Lower leg skin (tissue), 4 donors: ENCODE measurements at regions of chr16 and their contacts with region 1.

Region 1: GRCh38 chr16:88785106-88785924 is at the start of gene PIEZO1:
- DNase-seq: peak in 1 of 2 donors; percentile 93
- H3K4me3 ChIP-seq: peak within 1 kb of the TSS; percentile 69
- CTCF ChIP-seq: peak in 1 of 3 donors; percentile 66
- POLR2A ChIP-seq: no peak
- total RNA-seq, gene PIEZO1: 196 to 281 (median 206) TPM

Region 2: DNA sequence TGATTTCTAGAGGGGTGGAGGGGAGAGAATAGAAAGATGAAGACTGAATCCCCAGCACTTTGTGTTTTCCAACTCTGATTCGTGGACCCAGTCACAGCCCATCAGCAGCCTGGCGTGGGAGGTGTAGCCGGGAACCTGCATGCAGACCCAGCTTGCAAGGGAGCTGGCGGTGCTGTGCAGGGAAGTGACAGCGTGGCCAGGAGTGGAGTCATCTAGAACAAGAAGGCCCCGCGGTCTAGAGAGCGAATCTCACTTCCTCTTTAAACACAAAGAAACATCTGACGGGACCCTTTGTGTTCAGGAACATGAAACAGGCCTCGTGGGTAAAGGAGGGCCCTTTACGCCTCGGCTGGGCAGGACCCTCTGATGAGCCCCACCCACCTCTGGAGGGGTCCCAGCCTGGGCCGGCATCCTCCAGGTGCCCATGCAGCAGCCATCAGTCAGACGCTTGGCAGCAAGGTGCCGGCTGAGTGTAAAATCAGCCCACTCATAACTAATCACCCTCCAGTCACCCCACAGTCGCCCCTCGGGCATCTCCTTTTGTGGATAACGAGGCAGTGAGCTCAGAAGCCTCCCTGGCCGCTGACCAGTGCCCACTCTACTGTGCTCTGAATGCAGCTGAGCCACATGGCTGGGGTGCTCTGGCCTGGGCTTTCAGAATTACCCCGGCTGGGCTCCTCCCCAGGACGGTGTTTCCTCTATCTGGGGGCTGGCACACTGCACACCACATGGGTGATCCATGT is 103.4 kb before region 1 on chr16:
- intact Hi-C with region 1: no loop called
- DNase-seq: peak; percentile 57 to 90
- H3K4me3 ChIP-seq: no peak overlapping the region
- CTCF ChIP-seq: no peak
- POLR2A ChIP-seq: no peak

Region 3: GRCh38 chr16:88737298-88738150 is 47.8 kb before region 1 on chr16:
- intact Hi-C with region 1: loop called (anchors 5 kb)
- DNase-seq: peak in 1 of 2 donors; percentile 54
- H3K4me3 ChIP-seq: no peak overlapping the region
- CTCF ChIP-seq: peak in 1 of 3 donors; percentile 81
- POLR2A ChIP-seq: no peak

Region 4: DNA sequence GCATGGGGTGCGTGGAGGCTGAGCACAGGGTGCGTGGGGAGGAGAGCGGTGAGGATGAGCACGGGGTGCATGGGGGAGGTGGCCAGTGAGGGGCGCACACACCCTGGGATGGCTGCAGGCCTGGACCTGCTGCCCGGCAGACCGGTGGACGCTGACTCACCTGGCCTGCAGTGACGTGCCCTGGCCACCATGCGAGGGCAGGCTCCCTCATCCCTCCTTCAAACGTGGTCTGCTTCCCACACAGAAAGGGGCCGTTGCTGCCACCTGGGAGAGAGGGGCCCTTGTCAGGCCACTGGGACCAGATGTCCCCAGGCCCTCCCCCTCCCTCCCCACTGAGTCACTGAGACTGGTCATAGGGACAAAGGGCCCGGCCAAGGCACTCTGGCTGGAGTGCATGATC is 46.5 kb after region 1 on chr16:
- intact Hi-C with region 1: no loop called
- DNase-seq: no peak
- H3K4me3 ChIP-seq: no peak overlapping the region
- CTCF ChIP-seq: no peak
- POLR2A ChIP-seq: no peak

Region 5: GRCh38 chr16:88957887-88958577 is 172.7 kb after region 1 on chr16:
- intact Hi-C with region 1: no loop called
- DNase-seq: no peak
- H3K4me3 ChIP-seq: no peak overlapping the region
- CTCF ChIP-seq: no peak
- POLR2A ChIP-seq: no peak